ENCODE measurements at regions of chr11 and their contacts with region 1.

Region 1: DNA sequence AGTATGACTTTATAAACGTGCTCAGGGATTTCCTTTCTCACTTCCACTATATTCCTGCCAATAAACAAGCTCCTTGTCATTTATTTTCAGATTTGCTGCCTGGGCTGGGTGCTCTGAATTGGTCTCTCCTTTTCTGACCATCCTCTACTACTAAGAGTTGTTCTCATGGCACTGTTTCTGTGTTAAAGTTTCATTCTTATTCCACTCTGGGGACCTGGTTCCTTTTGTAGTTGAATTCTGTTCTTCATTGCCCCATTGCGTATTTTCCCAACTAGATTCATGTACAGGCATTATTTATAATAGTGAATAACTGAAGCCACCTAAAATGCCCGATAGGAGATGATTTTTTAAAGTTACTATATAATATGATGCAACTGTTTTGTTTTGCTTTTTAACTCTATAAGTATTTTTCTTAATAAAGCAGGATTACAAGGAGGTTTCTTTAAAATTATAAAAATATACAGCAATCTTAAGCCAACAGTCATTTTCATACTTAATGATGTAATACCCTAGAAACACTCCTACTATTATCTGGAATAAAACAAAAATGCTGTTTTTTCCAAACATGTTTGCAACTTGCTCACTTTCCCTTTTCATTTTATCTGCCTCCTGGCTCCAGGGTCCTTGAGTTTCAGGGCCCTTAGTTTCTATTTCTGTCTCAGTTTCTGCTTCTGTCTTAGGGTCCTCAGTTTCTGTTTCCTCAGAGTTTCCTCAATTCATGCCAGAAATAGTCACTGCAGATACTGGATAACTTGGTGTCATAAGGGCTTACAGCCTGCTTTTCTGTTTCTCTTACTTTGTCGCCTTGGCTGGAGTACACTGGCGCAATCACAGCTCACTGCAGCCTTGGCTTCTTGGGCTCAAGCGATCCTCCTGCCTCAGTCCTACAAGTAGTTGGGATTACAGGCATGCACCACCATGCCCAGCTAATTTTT is 9.8 kb upstream of the FUT4 start:
- DNase-seq: no peak
- H3K4me3 ChIP-seq: no peak overlapping the region
- H3K27me3 ChIP-seq: no peaks in the 10 kb centered on the region; the same call in 1 of the 2 replicates
- CTCF ChIP-seq: no peak

Region 2: GRCh38 chr11:94519478-94520084 is 14.4 kb before region 1 on chr11:
- CTCF ChIA-PET with region 1: interaction called, 12 read pairs
- POLR2A ChIA-PET with region 1: no interaction called
- DNase-seq: no peak
- H3K4me3 ChIP-seq: no peak overlapping the region
- H3K27me3 ChIP-seq: no peaks in the 10 kb centered on the region; the same call in none of the 2 replicates
- CTCF ChIP-seq: peak; percentile 56

Region 3: GRCh38 chr11:94719876-94720275 is 185.9 kb after region 1 on chr11:
- CTCF ChIA-PET with region 1: no interaction called
- POLR2A ChIA-PET with region 1: no interaction called
- DNase-seq: no peak
- H3K4me3 ChIP-seq: no peak overlapping the region
- H3K27me3 ChIP-seq: peaks cover 6% of the 10 kb centered on the region; the same call in 1 of the 2 replicates
- CTCF ChIP-seq: no peak

Measured in BJ (cell line).